ENCODE measurements at regions of chr14 and their contacts with region 1.

Region 1: DNA sequence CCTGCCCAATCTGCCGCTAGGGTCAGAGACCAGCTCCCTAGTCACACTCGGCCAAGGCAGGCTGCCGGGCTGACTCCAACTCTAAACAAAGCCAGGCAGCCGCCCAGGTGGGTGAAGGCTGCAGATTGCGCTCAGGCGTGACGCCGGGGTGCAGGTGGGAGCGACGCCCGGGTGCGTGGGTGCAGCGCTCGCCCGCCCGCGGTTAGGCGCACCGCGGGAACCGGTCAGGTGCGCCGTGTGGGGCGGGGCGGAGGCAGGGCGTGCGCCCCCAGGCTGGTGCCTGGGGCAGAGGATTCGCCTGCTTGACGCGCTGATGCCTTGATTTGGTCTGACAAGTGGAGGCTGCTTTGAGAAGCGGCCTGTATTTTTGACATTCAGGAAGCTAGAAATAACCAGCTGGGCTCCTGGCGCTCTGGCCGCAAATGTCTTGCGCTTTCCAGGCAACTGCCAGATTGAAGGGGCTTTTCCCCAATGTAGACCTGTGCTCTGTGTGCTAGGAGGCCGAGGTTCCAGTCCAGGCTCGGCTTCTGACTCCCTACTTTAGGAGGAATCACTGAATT is 126.7 kb upstream of the HIF1A start:
- DNase-seq: peak; percentile 45 to 62 (median 62)
- H3K4me3 ChIP-seq: no peak overlapping the region
- H3K4me3 Mint-ChIP-seq: peak overlapping the region; percentile 59 to 86 (median 74)
- H3K27ac ChIP-seq: no peak overlapping the region
- H3K27ac Mint-ChIP-seq: peak overlapping the region in 6 of 7 donors; percentile 2 to 83 (median 54)
- H3K4me1 ChIP-seq: peaks cover 30% of the 10 kb centered on the region
- H3K4me1 Mint-ChIP-seq: peaks cover 25 to 54% (median 36%) of the 10 kb centered on the region in 4 donors
- H3K27me3 ChIP-seq: no peaks in the 10 kb centered on the region
- H3K27me3 Mint-ChIP-seq: no peaks in the 10 kb centered on the region

Region 2: GRCh38 chr14:61537563-61538463 is 30.8 kb before region 1 on chr14:
- CTCF ChIA-PET with region 1: no interaction called
- POLR2A ChIA-PET with region 1: no interaction called
- intact Hi-C with region 1: loop called (anchors 5 kb)
- DNase-seq: no peak
- H3K4me3 ChIP-seq: no peak overlapping the region
- H3K4me3 Mint-ChIP-seq: no peak overlapping the region
- H3K27ac ChIP-seq: no peak overlapping the region
- H3K27ac Mint-ChIP-seq: peak overlapping the region in 6 of 7 donors; percentile 52 to 90 (median 76)
- H3K4me1 ChIP-seq: no peaks in the 10 kb centered on the region
- H3K4me1 Mint-ChIP-seq: peaks cover 2 to 34% (median 19%) of the 10 kb centered on the region in 4 donors
- H3K27me3 ChIP-seq: no peaks in the 10 kb centered on the region
- H3K27me3 Mint-ChIP-seq: no peaks in the 10 kb centered on the region